Activated naive CD4-positive, alpha-beta T cell treated with anti-CD3 and anti-CD28 coated beads for 36 hours (primary cell): ENCODE measurements at regions of chr11 and their contacts with region 1.

Region 1: DNA sequence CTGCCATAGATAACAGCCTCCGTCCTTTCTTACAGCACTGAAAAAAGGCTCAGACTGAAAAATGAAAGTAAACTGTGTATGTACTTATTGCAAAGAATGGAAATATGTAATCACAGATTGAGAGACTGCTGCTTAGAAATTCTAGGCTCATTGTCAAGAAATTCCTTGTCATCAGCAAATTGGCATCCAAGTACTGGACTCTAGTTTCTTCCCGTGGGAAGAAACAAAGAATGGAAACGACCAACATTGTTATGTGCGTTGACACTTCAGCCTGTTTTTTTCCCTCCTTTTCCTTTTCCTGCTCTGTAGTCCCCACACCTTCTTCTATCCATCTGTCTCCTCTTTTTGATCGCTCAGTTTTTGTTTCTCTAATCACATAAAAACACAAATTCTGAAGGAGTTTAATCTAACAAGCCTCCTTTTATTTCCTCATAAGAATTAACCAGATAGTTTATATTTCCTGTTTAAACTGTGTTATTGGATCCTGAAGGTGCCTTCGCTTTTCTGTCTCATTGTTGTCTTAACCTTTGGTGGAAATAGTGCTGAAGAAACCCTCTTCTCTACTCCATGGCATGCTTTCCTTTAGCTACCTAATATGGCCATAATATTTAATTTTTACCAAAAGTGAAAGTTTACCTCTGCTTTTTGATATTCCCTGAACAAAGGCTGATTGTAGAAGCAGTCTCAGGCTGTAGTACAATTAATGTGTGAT is 20.0 kb upstream of the CASP12 start:
- DNase-seq: no peak
- H3K4me3 Mint-ChIP-seq: peak overlapping the region; percentile 59
- H3K27ac Mint-ChIP-seq: peak overlapping the region; percentile 78
- H3K4me1 Mint-ChIP-seq: peaks cover 38% of the 10 kb centered on the region
- H3K27me3 Mint-ChIP-seq: no peaks in the 10 kb centered on the region

Region 2: GRCh38 chr11:104799251-104799650 is 119.0 kb before region 1 on chr11:
- CTCF ChIA-PET with region 1: no interaction called
- intact Hi-C with region 1: loop called (anchors 2 kb)
- DNase-seq: no peak
- H3K4me3 Mint-ChIP-seq: peak overlapping the region; percentile 53
- H3K27ac Mint-ChIP-seq: peak overlapping the region; percentile 68
- H3K4me1 Mint-ChIP-seq: peaks cover 34% of the 10 kb centered on the region
- H3K27me3 Mint-ChIP-seq: no peaks in the 10 kb centered on the region

Region 3: GRCh38 chr11:104897891-104898684 is 20.2 kb before region 1 on chr11 and contains the start of gene CASP12:
- CTCF ChIA-PET with region 1: no interaction called
- intact Hi-C with region 1: loop called (anchors 1 kb)
- DNase-seq: peak; percentile 32
- H3K4me3 Mint-ChIP-seq: peak within 1 kb of the TSS; percentile 64
- H3K27ac Mint-ChIP-seq: peak within 1 kb of the TSS; percentile 76
- H3K4me1 Mint-ChIP-seq: peaks cover 26% of the 10 kb centered on the region
- H3K27me3 Mint-ChIP-seq: no peaks in the 10 kb centered on the region
- total RNA-seq, gene CASP12: not detected

Region 4: GRCh38 chr11:104946907-104947306 is 28.6 kb after region 1 on chr11:
- CTCF ChIA-PET with region 1: no interaction called
- intact Hi-C with region 1: loop called (anchors 1 kb)
- DNase-seq: peak; percentile 47
- H3K4me3 Mint-ChIP-seq: no peak overlapping the region
- H3K27ac Mint-ChIP-seq: peak overlapping the region; percentile 6
- H3K4me1 Mint-ChIP-seq: peaks cover 7% of the 10 kb centered on the region
- H3K27me3 Mint-ChIP-seq: no peaks in the 10 kb centered on the region

Region 5: DNA sequence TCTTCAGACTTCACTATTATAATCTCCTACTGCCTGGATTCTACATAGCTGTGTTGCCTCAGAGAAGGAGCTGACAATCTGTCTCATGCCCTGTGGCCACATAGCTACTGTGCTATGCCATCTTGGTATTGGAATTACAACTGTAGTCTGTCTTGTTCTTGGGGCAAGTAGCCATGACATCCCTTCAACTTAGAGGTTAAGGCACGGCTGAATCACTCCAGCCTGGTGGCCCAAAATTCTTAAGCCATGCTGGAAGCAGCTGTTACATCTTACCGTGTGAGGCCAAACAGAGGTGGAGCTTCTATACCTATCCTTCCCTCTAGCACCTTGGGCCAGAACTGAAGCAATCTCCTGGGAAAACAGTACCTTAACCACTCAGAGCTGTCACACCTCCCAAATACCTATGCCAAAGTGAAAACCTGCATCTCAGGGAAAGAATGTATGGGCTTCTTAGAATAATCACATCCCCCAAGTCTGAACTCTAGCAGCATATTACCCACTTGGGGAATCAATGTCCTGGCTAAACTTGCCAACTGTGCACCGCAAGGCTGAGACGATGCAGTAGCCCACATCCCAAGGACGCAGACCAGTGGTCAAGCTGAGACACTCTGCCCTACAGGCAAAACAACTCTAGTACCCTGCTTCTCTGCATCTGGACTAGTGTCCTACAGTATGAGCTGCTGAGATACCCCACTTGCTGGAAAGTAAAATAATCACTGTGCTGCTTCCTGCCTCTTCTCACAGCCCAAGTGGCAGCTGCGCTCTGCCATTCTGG is 206.7 kb after region 1 on chr11:
- CTCF ChIA-PET with region 1: no interaction called
- intact Hi-C with region 1: no loop called
- DNase-seq: no peak
- H3K4me3 Mint-ChIP-seq: no peak overlapping the region
- H3K27ac Mint-ChIP-seq: no peak overlapping the region
- H3K4me1 Mint-ChIP-seq: no peaks in the 10 kb centered on the region
- H3K27me3 Mint-ChIP-seq: no peaks in the 10 kb centered on the region